Motor neuron (in vitro differentiated cells): ENCODE measurements at regions of chr18 and their contacts with region 1.

Region 1: GRCh38 chr18:1585879-1586488 is 681.3 kb downstream of the ADCYAP1 start:
- ATAC-seq: peak in 5 of 8 experiments; percentile 39 to 85 (median 68)
- H3K4me3 ChIP-seq: no peak overlapping the region
- H3K27ac ChIP-seq: no peak overlapping the region
- H3K4me1 ChIP-seq: no peaks in the 10 kb centered on the region

Region 2: GRCh38 chr18:1488956-1489355 is 97.0 kb before region 1 on chr18:
- in situ Hi-C with region 1: no loop called
- ATAC-seq: peak in 1 of 8 experiments; percentile 76
- H3K4me3 ChIP-seq: no peak overlapping the region
- H3K27ac ChIP-seq: no peak overlapping the region
- H3K4me1 ChIP-seq: no peaks in the 10 kb centered on the region

Region 3: GRCh38 chr18:2223849-2224248 is 637.9 kb after region 1 on chr18:
- in situ Hi-C with region 1: loop called in 1 of 9 experiments (anchors 25 kb)
- ATAC-seq: peak; percentile 44 to 95 (median 67)
- H3K4me3 ChIP-seq: no peak overlapping the region
- H3K27ac ChIP-seq: no peak overlapping the region
- H3K4me1 ChIP-seq: peaks cover 0 to 9% of the 10 kb centered on the region in 2 donors

Region 4: DNA sequence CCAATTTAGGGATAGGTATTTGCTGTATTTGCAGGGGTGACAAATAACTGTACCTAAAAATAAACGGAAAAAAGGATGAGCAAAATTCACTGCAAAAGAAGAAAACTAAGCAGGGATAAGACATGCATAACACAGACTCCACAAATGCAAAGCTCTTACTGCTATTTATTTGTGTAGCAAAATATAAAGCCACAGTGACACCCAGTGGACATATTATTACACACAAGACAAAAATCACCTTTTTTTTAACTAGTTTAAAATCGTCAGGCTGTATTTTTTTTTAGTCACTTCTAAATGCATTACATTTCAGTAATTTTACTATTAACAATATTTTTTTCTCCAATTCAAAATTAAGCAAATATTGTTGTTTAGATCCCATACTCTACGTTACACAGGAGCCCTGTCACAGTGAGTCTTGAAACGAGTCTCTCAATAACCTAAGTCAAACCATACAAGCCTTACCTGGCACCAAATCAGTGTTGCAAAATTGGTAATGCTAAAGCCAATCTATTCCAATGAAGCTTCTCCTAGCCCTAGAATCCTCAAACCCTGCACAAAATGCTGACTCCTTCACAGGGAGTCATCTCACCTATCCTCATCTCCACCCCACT is 961.6 kb after region 1 on chr18:
- in situ Hi-C with region 1: loop called in 3 of 9 experiments (anchors 25 kb)
- ATAC-seq: peak in 5 of 8 experiments; percentile 45 to 69 (median 63)
- H3K4me3 ChIP-seq: no peak overlapping the region
- H3K27ac ChIP-seq: no peak overlapping the region
- H3K4me1 ChIP-seq: no peaks in the 10 kb centered on the region